Testis (tissue), 5 donors: ENCODE measurements at regions of chr13 and their contacts with region 1.

Region 1: GRCh38 chr13:19863323-19864023 is at the start of gene ZMYM5:
- DNase-seq: peak; percentile 98
- H3K4me3 ChIP-seq: peak within 1 kb of the TSS; percentile 87 to 96
- H3K27ac ChIP-seq: peak within 1 kb of the TSS; percentile 98 to 100
- H3K4me1 ChIP-seq: peaks cover 14% of the 10 kb centered on the region
- H3K27me3 ChIP-seq: no peaks in the 10 kb centered on the region
- CTCF ChIP-seq: no peak
- POLR2A ChIP-seq: peak; percentile 67
- total RNA-seq, gene ZMYM5: 29.5 to 37.1 TPM

Region 2: GRCh38 chr13:19959831-19960652 is 96.6 kb after region 1 on chr13:
- intact Hi-C with region 1: loop called (anchors 5 kb)
- DNase-seq: peak; percentile 92
- H3K4me3 ChIP-seq: peak overlapping the region; percentile 92
- H3K27ac ChIP-seq: peak overlapping the region; percentile 99 to 100
- H3K4me1 ChIP-seq: peaks cover 17% of the 10 kb centered on the region
- H3K27me3 ChIP-seq: no peaks in the 10 kb centered on the region
- CTCF ChIP-seq: peak; percentile 80 to 89 (median 85)
- POLR2A ChIP-seq: no peak

Region 3: GRCh38 chr13:20000062-20000552 is 136.6 kb after region 1 on chr13:
- intact Hi-C with region 1: no loop called
- DNase-seq: no peak
- H3K4me3 ChIP-seq: no peak overlapping the region
- H3K27ac ChIP-seq: no peak overlapping the region
- H3K4me1 ChIP-seq: peaks cover 3% of the 10 kb centered on the region
- H3K27me3 ChIP-seq: no peaks in the 10 kb centered on the region
- CTCF ChIP-seq: no peak
- POLR2A ChIP-seq: no peak